Head of caudate nucleus (tissue), 42 donors: ENCODE measurements at regions of chr9 and their contacts with region 1.

Region 1: GRCh38 chr9:87497604-87498045 is at the start of gene DAPK1:
- DNase-seq: peak in 38 of 42 donors; percentile 35 to 83 (median 67)

Region 2: GRCh38 chr9:87342743-87343142 is 154.9 kb before region 1 on chr9:
- intact Hi-C with region 1: loop called (anchors 10 kb)
- DNase-seq: no peak

Region 3: DNA sequence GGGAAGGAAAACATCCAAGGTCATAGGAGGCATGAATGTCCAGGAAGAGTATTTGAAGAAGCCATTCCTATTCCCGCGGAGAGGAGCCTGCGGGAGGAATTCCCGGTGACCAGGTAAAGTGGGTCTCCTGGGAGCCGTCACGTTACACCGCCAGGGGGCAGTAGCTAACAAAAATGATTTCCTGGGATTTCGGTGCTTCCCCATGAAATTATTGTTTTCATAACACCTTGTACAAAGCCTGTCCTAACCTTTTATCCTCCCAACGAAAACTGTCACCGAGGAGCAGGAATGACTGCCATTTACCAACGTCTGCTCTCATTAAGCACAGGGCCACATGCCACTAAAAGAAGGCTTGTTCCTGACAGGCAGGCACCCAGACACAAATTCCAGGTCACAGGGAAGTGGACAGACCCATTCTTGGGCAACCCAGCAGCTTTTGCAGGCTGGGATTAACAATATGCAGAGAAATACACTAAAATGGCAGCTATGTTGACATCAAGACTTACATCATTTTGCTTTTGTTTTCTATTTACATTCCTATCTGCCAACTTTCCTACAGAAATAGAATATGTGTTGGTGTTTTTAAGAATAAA is 187.1 kb after region 1 on chr9:
- intact Hi-C with region 1: no loop called
- DNase-seq: peak in 39 of 42 donors; percentile 38 to 90 (median 74)